Mammary epithelial cell (primary cell): ENCODE measurements at regions of chr5 and their contacts with region 1.

Region 1: GRCh38 chr5:79990598-79991507 is at the start of gene MTX3:
- DNase-seq: peak; percentile 79
- H3K4me3 ChIP-seq: peak within 1 kb of the TSS; percentile 63 to 77 (median 77)
- H3K27ac ChIP-seq: peak within 1 kb of the TSS; percentile 59
- H3K4me1 ChIP-seq: peaks cover 3% of the 10 kb centered on the region
- H3K27me3 ChIP-seq: no peaks in the 10 kb centered on the region
- CTCF ChIP-seq: no peak
- total RNA-seq, gene MTX3: 21.7 to 23.0 TPM

Region 2: DNA sequence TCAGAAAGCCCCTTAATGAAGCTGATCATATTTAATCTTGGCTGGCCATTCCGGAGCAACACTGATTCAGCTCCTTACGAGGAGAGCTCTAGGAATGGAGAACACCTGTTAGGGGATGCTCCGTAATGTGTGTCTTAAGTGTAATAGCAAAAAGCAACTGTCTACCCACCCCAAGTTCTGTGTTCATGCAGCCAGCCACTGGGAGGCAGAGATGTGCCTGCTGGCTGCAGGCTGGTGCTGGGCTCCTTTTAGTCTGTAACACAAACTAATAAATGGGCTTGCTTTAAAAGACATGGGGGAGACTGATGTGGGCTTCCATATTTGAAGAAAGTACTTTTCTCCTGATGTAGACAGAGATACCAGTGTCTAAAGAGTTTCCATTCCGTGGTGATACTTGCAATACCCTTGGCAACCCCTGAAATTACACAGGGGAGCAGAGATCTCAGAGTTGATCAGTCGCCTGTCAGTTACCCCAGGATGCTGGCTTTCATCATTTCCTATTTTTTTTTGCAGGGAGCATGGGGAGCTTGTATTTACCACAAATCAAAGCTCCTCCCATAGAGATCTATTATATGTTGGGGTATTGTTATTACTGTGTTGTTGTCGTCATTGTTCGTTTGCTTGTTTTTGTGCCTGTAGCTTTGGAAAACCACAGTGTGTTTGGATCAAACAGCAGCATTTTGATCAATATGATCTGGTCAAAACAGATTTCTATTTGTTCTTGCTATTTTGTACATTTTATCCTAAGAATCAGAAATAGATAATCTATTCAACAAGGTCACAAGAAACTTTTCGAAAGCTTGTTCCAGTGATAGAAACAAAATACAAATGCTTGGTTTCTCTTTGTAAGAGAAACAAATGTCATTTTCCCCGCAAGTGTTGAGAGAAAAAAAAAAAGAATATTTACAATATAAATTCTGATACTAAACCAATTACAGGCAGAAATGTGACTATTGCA is 65.6 kb before region 1 on chr5:
- CTCF ChIA-PET with region 1: no interaction called
- dilution Hi-C with region 1: no loop called
- in situ Hi-C with region 1: no loop called
- intact Hi-C with region 1: loop called (anchors 1 kb)
- DNase-seq: no peak
- H3K4me3 ChIP-seq: no peak overlapping the region
- H3K27ac ChIP-seq: no peak overlapping the region
- H3K4me1 ChIP-seq: no peaks in the 10 kb centered on the region
- H3K27me3 ChIP-seq: peaks cover 4% of the 10 kb centered on the region
- CTCF ChIP-seq: peak; percentile 38 to 81